ENCODE measurements at regions of chr19 and their contacts with region 1.

Region 1: GRCh38 chr19:49570138-49570856 is 10.1 kb downstream of the NOSIP start:
- DNase-seq: peak; percentile 74
- H3K4me3 Mint-ChIP-seq: no peak overlapping the region
- H3K27ac Mint-ChIP-seq: no peak overlapping the region
- H3K4me1 Mint-ChIP-seq: peaks cover 10% of the 10 kb centered on the region
- H3K27me3 Mint-ChIP-seq: no peaks in the 10 kb centered on the region
- CTCF ChIP-seq: peak; percentile 98

Region 2: GRCh38 chr19:49391581-49392399 is 178.5 kb before region 1 on chr19:
- CTCF ChIA-PET with region 1: no interaction called
- intact Hi-C with region 1: loop called (anchors 5 kb)
- DNase-seq: peak; percentile 87
- H3K4me3 Mint-ChIP-seq: no peak overlapping the region
- H3K27ac Mint-ChIP-seq: no peak overlapping the region
- H3K4me1 Mint-ChIP-seq: peaks cover 9% of the 10 kb centered on the region
- H3K27me3 Mint-ChIP-seq: peaks cover 83% of the 10 kb centered on the region
- CTCF ChIP-seq: peak; percentile 85

Region 3: GRCh38 chr19:49488046-49488862 is 82.0 kb before region 1 on chr19:
- CTCF ChIA-PET with region 1: no interaction called
- intact Hi-C with region 1: no loop called
- DNase-seq: no peak
- H3K4me3 Mint-ChIP-seq: peak overlapping the region; percentile 97
- H3K27ac Mint-ChIP-seq: peak overlapping the region; percentile 99
- H3K4me1 Mint-ChIP-seq: no peaks in the 10 kb centered on the region
- H3K27me3 Mint-ChIP-seq: no peaks in the 10 kb centered on the region
- CTCF ChIP-seq: no peak

Region 4: GRCh38 chr19:49502866-49503581 is 67.3 kb before region 1 on chr19:
- CTCF ChIA-PET with region 1: interaction called, 11 read pairs
- intact Hi-C with region 1: loop called (anchors 1 kb)
- DNase-seq: peak; percentile 67
- H3K4me3 Mint-ChIP-seq: no peak overlapping the region
- H3K27ac Mint-ChIP-seq: no peak overlapping the region
- H3K4me1 Mint-ChIP-seq: peaks cover 11% of the 10 kb centered on the region
- H3K27me3 Mint-ChIP-seq: no peaks in the 10 kb centered on the region
- CTCF ChIP-seq: peak; percentile 55

Region 5: GRCh38 chr19:49546825-49547565 is 23.3 kb before region 1 on chr19:
- CTCF ChIA-PET with region 1: interaction called, 12 read pairs
- intact Hi-C with region 1: no loop called
- DNase-seq: peak; percentile 80
- H3K4me3 Mint-ChIP-seq: peak overlapping the region; percentile 29
- H3K27ac Mint-ChIP-seq: peak overlapping the region; percentile 13
- H3K4me1 Mint-ChIP-seq: no peaks in the 10 kb centered on the region
- H3K27me3 Mint-ChIP-seq: peaks cover 17% of the 10 kb centered on the region
- CTCF ChIP-seq: peak; percentile 87

Region 6: DNA sequence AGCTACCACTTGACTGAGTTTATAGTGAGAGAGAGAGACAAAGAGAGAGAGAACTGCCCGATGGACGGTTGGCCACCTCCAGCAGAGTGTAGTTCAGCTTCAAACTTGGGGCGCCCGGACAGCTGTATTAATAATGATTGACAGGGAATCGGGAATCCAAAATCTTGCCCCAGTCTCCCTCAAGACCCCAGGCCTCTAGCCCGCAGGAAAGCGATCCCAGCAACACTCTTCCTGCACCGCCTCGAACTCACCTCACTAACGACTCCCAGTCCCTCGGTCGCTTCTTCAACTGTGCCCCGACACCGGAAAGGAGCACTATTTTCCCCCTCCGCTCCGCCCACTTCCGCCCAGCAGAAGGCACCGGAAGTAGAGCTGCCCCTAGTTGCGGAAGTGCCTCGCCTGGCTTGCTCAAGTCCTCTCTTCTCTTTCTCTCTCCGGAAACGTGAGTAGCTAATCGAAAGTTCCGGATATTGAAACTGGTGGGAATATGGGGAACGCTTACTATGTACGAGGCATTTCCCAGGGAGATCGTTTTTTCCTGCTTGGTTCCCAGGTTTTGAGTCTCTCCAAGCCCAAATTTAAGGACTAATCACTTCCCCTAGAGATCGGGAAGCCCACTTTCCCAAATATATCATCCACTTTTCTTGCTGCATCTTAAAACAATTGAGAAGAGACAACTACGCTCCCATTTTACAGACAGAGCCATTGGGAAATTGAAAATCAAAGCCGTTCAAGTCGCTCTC is 10.1 kb after region 1 on chr19 and contains the start of gene NOSIP:
- CTCF ChIA-PET with region 1: interaction called, 25 read pairs
- intact Hi-C with region 1: no loop called
- DNase-seq: peak; percentile 97
- H3K4me3 Mint-ChIP-seq: peak within 1 kb of the TSS; percentile 97
- H3K27ac Mint-ChIP-seq: peak within 1 kb of the TSS; percentile 97
- H3K4me1 Mint-ChIP-seq: peaks cover 23% of the 10 kb centered on the region
- H3K27me3 Mint-ChIP-seq: no peaks in the 10 kb centered on the region
- CTCF ChIP-seq: no peak
- total RNA-seq, gene NOSIP: 76.9 and 81.2 TPM in 2 replicates

Region 7: GRCh38 chr19:49676690-49677231 is 106.5 kb after region 1 on chr19:
- CTCF ChIA-PET with region 1: interaction called, 5 read pairs
- intact Hi-C with region 1: loop called (anchors 5 kb)
- DNase-seq: peak; percentile 99
- H3K4me3 Mint-ChIP-seq: peak overlapping the region; percentile 89
- H3K27ac Mint-ChIP-seq: peak overlapping the region; percentile 99
- H3K4me1 Mint-ChIP-seq: peaks cover 29% of the 10 kb centered on the region
- H3K27me3 Mint-ChIP-seq: no peaks in the 10 kb centered on the region
- CTCF ChIP-seq: no peak

Measured in Calu3 (cell line).